Panc1 (cell line): ENCODE measurements at regions of chr17 and their contacts with region 1.

Region 1: DNA sequence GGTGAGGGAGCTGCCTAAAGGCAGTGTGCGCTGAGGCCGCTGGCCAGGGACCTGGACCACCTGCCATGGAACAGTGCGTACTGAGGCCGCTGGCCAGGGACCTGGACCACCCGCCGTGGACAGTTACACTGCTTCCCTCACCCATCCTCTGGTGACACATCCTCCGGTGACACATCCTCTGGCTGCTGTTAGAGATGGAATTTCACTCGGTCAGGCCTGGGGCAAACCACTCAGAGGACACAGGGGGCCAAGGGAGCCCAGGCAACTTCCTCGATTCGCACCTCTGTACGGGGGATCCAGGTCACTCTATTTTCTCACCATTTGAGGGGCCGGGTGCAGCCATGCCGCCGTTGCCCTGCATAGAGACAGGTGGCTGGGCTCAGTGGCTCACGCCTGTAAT is 32.4 kb upstream of the RPTOR start:
- DNase-seq: no peak
- ATAC-seq: 0 out of 2 replicates have a peak, but pooled peaks have one; percentile 40
- H3K4me3 ChIP-seq: no peak overlapping the region
- H3K27ac ChIP-seq: no peak overlapping the region
- H3K4me1 ChIP-seq: no peaks in the 10 kb centered on the region
- H3K27me3 ChIP-seq: no peaks in the 10 kb centered on the region
- CTCF ChIP-seq: no peak

Region 2: GRCh38 chr17:80544655-80545498 is 32.6 kb after region 1 on chr17 and contains the start of gene RPTOR:
- CTCF ChIA-PET with region 1: no interaction called
- POLR2A ChIA-PET with region 1: interaction called, 14 read pairs
- in situ Hi-C with region 1: no loop called
- intact Hi-C with region 1: no loop called
- DNase-seq: peak; percentile 78
- ATAC-seq: peak; percentile 97
- H3K4me3 ChIP-seq: peak within 1 kb of the TSS; percentile 96 to 98
- H3K27ac ChIP-seq: peak within 1 kb of the TSS; percentile 96
- H3K4me1 ChIP-seq: peaks cover 19% of the 10 kb centered on the region
- H3K27me3 ChIP-seq: no peaks in the 10 kb centered on the region
- CTCF ChIP-seq: no peak
- total RNA-seq, gene RPTOR: 58.0 TPM